Naive thymus-derived CD4-positive, alpha-beta T cell (primary cell): ENCODE measurements at regions of chr7 and their contacts with region 1.

Region 1: DNA sequence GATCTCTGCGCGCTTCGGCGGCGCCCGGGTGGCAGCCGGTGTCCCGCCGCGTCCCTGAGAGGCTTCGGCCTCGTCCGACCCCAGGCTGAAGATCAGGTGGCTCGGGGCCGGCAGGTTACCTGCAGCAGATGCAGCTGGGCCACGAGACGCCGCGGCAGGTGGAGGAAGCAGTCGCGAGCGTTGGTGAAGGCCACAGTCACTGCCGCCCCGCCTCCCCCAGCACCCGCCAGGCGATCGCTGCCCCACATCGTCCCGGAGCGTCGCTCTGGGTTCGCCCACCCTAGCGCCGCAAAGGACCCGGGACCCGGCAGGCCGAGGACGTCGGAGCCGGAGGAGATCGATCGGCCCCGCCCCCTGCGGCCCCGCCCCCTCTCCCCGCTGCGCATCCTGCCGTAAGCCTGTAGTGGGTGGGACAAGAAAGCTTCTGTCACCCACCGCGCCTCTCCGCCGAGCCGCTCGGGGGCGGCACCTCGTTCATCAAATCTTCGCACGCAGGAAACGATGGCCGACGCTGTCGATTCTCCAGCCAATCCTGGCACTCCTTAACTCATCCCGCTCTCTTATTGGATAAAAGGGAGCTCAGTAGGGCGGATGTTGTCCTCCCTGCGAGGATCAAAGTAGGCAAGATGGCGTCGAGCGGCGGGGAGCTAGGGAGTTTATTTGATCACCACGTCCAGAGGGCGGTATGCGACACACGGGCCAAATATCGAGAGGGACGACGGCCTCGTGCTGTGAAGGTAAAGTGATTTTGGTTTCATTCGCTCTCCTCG is at the starts of genes PEX1 and RBM48:
- DNase-seq: peak; percentile 79 to 98 (median 96)
- ATAC-seq: peak; percentile 96
- H3K4me3 ChIP-seq: peak within 1 kb of the TSS; percentile 95
- H3K4me3 Mint-ChIP-seq: peak within 1 kb of the TSS; percentile 86 to 96 (median 90)
- H3K27ac ChIP-seq: peak within 1 kb of the TSS; percentile 91
- H3K27ac Mint-ChIP-seq: peak within 1 kb of the TSS; percentile 91 to 100 (median 95)
- H3K4me1 ChIP-seq: peaks cover 13 to 23% of the 10 kb centered on the region in 2 donors
- H3K4me1 Mint-ChIP-seq: peaks cover 24 to 67% (median 52%) of the 10 kb centered on the region in 7 donors
- H3K27me3 ChIP-seq: no peaks in the 10 kb centered on the region
- H3K27me3 Mint-ChIP-seq: peaks cover 0 to 2% (median 0%) of the 10 kb centered on the region in 5 donors
- total RNA-seq, gene PEX1: 18.6 to 43.3 (median 25.6) TPM
- total RNA-seq, gene RBM48: 16.9 to 42.7 (median 37.8) TPM

Region 2: DNA sequence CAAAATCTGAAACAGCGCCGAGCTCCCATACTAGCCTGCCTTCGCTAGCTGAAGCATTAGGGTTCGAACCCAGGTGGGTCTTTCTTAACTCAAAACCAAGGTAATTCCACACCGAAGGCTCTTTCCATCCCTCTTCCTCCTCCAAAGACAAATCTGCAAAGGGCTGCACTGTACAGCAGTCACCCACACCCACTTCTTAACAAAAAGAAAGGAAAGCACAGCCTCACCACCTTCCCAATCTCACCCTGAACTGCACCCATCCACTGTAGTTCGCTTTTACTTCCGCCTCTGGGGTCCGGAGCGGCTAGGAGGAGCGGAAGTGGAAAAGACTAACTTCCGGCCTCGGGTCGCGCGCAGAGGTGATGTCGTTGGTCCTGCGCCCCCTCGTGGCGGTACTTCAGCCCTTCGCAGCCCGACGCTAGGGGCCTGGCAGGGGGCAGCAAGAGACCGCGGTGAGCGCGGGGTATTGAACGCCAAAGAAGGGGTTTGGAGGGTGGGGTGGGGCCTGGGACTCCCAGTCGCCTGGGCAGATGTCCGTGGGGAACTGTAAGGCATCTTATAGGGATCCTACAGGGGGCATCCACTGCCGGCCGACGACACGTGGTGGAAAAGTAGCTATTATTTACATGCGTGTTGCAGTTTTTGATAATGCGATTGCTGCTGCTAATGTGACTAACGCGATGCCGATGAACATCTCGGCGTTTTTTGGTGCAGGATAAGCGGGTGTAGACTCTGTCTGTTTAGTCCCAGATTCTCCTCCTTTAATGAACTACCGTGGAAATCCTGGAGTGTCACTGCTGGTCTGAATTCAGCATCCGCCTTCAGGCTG is 647.7 kb before region 1 on chr7 and contains the start of gene MTERF1:
- CTCF ChIA-PET with region 1: no interaction called
- POLR2A ChIA-PET with region 1: no interaction called
- intact Hi-C with region 1: loop called (anchors 1 kb)
- DNase-seq: peak; percentile 85 to 93 (median 91)
- ATAC-seq: peak; percentile 100
- H3K4me3 ChIP-seq: peak within 1 kb of the TSS; percentile 84
- H3K4me3 Mint-ChIP-seq: peak within 1 kb of the TSS; percentile 88 to 100 (median 98)
- H3K27ac ChIP-seq: peak within 1 kb of the TSS; percentile 72
- H3K27ac Mint-ChIP-seq: peak within 1 kb of the TSS; percentile 89 to 98 (median 96)
- H3K4me1 ChIP-seq: peaks cover 0 to 8% of the 10 kb centered on the region in 2 donors
- H3K4me1 Mint-ChIP-seq: peaks cover 31 to 53% (median 39%) of the 10 kb centered on the region in 7 donors
- H3K27me3 ChIP-seq: no peaks in the 10 kb centered on the region
- H3K27me3 Mint-ChIP-seq: peaks cover 0 to 9% (median 0%) of the 10 kb centered on the region in 5 donors
- total RNA-seq, gene MTERF1: 9.6 to 32.7 (median 17.8) TPM

Region 3: DNA sequence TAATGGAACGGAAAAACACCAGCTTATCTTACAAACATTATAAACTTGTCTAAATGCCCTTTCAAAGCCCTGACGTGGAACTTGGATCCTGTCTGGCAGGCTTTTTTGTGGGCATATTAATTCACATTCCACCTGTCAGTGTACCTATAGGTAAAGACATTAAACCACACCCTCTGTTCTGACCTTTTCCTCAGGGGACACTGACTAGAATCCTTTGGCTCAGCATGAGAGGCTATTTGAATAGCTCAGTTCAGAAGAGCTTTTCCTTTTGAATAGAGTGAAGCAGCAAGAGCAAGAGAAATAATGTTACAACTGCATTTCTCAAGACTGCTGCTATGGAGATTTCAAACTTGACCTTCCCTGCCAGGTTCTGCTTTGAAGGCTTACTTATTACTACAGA is 471.0 kb before region 1 on chr7:
- CTCF ChIA-PET with region 1: no interaction called
- POLR2A ChIA-PET with region 1: no interaction called
- intact Hi-C with region 1: no loop called
- DNase-seq: no peak
- ATAC-seq: no peak
- H3K4me3 ChIP-seq: no peak overlapping the region
- H3K4me3 Mint-ChIP-seq: peak overlapping the region in 7 of 10 donors; percentile 16 to 78 (median 70)
- H3K27ac ChIP-seq: no peak overlapping the region
- H3K27ac Mint-ChIP-seq: peak overlapping the region in 3 of 9 donors; percentile 31 to 58 (median 34)
- H3K4me1 ChIP-seq: peaks cover 10 to 12% of the 10 kb centered on the region in 2 donors
- H3K4me1 Mint-ChIP-seq: peaks cover 7 to 32% (median 19%) of the 10 kb centered on the region in 7 donors
- H3K27me3 ChIP-seq: no peaks in the 10 kb centered on the region
- H3K27me3 Mint-ChIP-seq: no peaks in the 10 kb centered on the region

Region 4: DNA sequence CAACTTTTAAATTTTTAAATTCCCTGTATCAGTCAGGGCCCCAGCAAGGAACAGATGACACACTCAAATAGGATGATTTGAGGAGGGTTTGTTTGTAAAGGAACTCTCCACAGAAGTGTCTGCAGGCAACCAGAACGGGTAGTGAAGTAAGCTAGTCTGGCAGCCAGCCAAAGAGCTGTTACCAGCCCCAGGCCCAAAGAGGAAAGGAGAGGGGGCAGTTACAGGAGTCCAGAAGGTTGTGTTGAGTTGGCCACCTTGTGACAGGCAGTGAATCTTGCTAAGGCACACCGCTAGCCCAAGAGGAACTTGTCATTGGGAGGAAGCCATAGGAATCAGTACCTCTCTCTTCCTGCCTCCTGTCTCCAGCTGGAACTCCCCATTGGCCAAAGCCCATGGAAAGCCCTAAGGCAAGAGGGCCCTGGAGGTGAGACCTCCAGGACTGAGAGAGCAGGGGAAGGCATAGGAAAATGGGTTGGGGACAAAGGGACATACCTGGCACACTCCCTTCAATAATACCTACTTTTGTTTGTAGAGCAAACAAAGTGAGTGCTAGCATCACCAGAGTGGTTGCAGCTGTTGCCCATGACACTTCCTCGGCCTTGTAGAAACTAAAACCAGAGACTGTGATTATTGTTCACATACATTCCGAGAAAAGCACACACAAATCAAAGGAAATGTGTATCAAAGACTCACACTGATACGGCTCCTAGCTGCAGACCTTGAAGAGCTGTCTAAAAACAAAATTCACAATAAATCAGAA is 106.5 kb before region 1 on chr7:
- CTCF ChIA-PET with region 1: no interaction called
- POLR2A ChIA-PET with region 1: no interaction called
- intact Hi-C with region 1: loop called in 1 of 2 experiments (anchors 1 kb)
- DNase-seq: no peak
- ATAC-seq: no peak
- H3K4me3 ChIP-seq: no peak overlapping the region
- H3K4me3 Mint-ChIP-seq: no peak overlapping the region
- H3K27ac ChIP-seq: no peak overlapping the region
- H3K27ac Mint-ChIP-seq: no peak overlapping the region
- H3K4me1 ChIP-seq: peaks cover 0 to 6% of the 10 kb centered on the region in 2 donors
- H3K4me1 Mint-ChIP-seq: peaks cover 5 to 16% (median 11%) of the 10 kb centered on the region in 7 donors
- H3K27me3 ChIP-seq: no peaks in the 10 kb centered on the region
- H3K27me3 Mint-ChIP-seq: peaks cover 2 to 16% (median 9%) of the 10 kb centered on the region in 5 donors

Region 5: GRCh38 chr7:92436612-92437445 is 91.5 kb before region 1 on chr7:
- CTCF ChIA-PET with region 1: no interaction called
- POLR2A ChIA-PET with region 1: no interaction called
- intact Hi-C with region 1: no loop called
- DNase-seq: no peak
- ATAC-seq: no peak
- H3K4me3 ChIP-seq: no peak overlapping the region
- H3K4me3 Mint-ChIP-seq: no peak overlapping the region
- H3K27ac ChIP-seq: no peak overlapping the region
- H3K27ac Mint-ChIP-seq: no peak overlapping the region
- H3K4me1 ChIP-seq: no peaks in the 10 kb centered on the region
- H3K4me1 Mint-ChIP-seq: peaks cover 0 to 5% (median 0%) of the 10 kb centered on the region in 7 donors
- H3K27me3 ChIP-seq: no peaks in the 10 kb centered on the region
- H3K27me3 Mint-ChIP-seq: peaks cover 0 to 12% (median 0%) of the 10 kb centered on the region in 5 donors

Region 6: GRCh38 chr7:92609921-92610518 is 81.6 kb after region 1 on chr7:
- CTCF ChIA-PET with region 1: no interaction called
- POLR2A ChIA-PET with region 1: interaction called, 3 read pairs
- intact Hi-C with region 1: loop called in 1 of 2 experiments (anchors 1 kb)
- DNase-seq: peak in 3 of 9 donors; percentile 18 to 32 (median 23)
- ATAC-seq: peak; percentile 65
- H3K4me3 ChIP-seq: no peak overlapping the region
- H3K4me3 Mint-ChIP-seq: peak overlapping the region in 1 of 10 donors; percentile 16
- H3K27ac ChIP-seq: no peak overlapping the region
- H3K27ac Mint-ChIP-seq: peak overlapping the region in 6 of 9 donors; percentile 2 to 85 (median 58)
- H3K4me1 ChIP-seq: no peaks in the 10 kb centered on the region
- H3K4me1 Mint-ChIP-seq: peaks cover 0 to 26% (median 8%) of the 10 kb centered on the region in 7 donors
- H3K27me3 ChIP-seq: no peaks in the 10 kb centered on the region
- H3K27me3 Mint-ChIP-seq: no peaks in the 10 kb centered on the region

Region 7: DNA sequence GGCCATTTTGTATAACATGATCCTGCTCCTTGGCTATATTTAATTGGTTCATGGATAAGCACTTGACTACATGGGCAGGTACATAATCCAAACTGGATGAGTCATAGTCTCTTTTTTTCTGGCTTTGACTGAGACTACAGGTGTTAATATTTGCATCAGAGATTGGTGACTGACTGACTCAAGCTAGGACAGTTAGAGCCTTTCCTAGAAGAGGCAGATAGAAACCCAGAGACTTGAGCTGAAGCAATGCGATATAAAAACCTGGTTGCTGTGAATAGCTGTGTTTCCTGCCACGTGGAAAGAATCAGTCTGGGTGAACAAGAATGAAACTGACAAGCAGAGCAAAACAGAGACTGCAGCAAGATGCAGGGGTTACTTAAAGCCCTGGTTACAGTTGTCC is 508.4 kb after region 1 on chr7:
- CTCF ChIA-PET with region 1: no interaction called
- POLR2A ChIA-PET with region 1: no interaction called
- intact Hi-C with region 1: loop called in 1 of 2 experiments (anchors 1 kb)
- DNase-seq: no peak
- ATAC-seq: peak; percentile 36
- H3K4me3 ChIP-seq: no peak overlapping the region
- H3K4me3 Mint-ChIP-seq: peak overlapping the region in 2 of 10 donors; percentile 9 to 16
- H3K27ac ChIP-seq: no peak overlapping the region
- H3K27ac Mint-ChIP-seq: peak overlapping the region in 3 of 9 donors; percentile 6 to 78 (median 49)
- H3K4me1 ChIP-seq: peaks cover 0 to 7% of the 10 kb centered on the region in 2 donors
- H3K4me1 Mint-ChIP-seq: peaks cover 0 to 30% (median 13%) of the 10 kb centered on the region in 7 donors
- H3K27me3 ChIP-seq: no peaks in the 10 kb centered on the region
- H3K27me3 Mint-ChIP-seq: no peaks in the 10 kb centered on the region

Region 8: GRCh38 chr7:93231799-93232672 is 703.7 kb after region 1 on chr7 and contains the start of gene VPS50:
- CTCF ChIA-PET with region 1: interaction called, 3 read pairs
- POLR2A ChIA-PET with region 1: interaction called, 8 read pairs
- intact Hi-C with region 1: loop called (anchors 1 kb)
- DNase-seq: peak; percentile 74 to 97 (median 96)
- ATAC-seq: peak; percentile 98
- H3K4me3 ChIP-seq: peak within 1 kb of the TSS; percentile 93
- H3K4me3 Mint-ChIP-seq: peak within 1 kb of the TSS; percentile 91 to 99 (median 97)
- H3K27ac ChIP-seq: peak within 1 kb of the TSS; percentile 89
- H3K27ac Mint-ChIP-seq: peak within 1 kb of the TSS; percentile 93 to 99 (median 98)
- H3K4me1 ChIP-seq: peaks cover 6% of the 10 kb centered on the region in 2 donors
- H3K4me1 Mint-ChIP-seq: peaks cover 5 to 38% (median 21%) of the 10 kb centered on the region in 7 donors
- H3K27me3 ChIP-seq: no peaks in the 10 kb centered on the region
- H3K27me3 Mint-ChIP-seq: peaks cover 0 to 12% (median 0%) of the 10 kb centered on the region in 5 donors
- total RNA-seq, gene VPS50: 19.8 to 44.2 (median 36.8) TPM